ENCODE measurements at regions of chr4 and their contacts with region 1.

Region 1: DNA sequence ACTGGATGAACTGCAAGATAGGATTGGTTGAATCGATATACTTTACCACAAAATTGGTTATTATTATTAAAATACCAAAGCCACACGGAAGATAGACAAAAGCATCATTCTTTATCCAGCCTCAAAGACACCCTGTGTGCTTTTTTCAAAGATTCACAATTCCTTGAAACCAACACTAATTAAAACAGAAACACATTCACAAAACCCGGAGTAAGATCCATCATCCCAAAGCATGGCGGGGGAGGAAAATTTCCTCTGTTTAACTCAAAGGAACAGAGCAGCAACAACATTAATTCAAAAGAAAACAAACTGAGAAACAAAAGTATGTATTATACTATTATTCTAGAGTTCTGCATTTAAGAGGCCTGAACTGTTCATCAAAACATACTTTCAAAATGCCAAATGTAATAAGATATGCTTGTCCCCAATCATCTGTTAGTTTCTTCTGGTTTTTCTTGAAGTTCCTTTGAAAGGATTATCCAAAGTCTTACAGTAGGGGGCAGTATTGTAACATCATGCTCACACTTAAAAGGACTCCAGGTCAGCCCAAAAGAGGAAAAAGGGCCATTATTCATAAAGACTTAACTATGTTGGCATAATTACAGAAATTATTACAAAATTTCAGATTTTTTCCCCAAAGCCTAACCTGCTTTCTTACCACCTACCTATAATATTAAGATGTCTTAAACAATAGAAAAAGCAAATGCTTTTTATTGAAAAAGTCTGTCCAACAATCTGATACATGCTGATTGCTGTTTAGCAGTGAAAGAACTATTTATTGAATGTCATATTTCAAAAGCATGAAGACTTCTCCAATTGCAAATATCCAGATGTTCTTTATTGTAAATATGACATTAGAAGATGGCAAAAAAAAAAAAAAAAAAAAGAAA is 168.7 kb downstream of the SCFD2 start:
- DNase-seq: peak; percentile 79
- H3K4me3 Mint-ChIP-seq: no peak overlapping the region
- H3K27ac Mint-ChIP-seq: no peak overlapping the region
- H3K4me1 Mint-ChIP-seq: no peaks in the 10 kb centered on the region
- H3K27me3 Mint-ChIP-seq: no peaks in the 10 kb centered on the region
- CTCF ChIP-seq: peak; percentile 78

Region 2: DNA sequence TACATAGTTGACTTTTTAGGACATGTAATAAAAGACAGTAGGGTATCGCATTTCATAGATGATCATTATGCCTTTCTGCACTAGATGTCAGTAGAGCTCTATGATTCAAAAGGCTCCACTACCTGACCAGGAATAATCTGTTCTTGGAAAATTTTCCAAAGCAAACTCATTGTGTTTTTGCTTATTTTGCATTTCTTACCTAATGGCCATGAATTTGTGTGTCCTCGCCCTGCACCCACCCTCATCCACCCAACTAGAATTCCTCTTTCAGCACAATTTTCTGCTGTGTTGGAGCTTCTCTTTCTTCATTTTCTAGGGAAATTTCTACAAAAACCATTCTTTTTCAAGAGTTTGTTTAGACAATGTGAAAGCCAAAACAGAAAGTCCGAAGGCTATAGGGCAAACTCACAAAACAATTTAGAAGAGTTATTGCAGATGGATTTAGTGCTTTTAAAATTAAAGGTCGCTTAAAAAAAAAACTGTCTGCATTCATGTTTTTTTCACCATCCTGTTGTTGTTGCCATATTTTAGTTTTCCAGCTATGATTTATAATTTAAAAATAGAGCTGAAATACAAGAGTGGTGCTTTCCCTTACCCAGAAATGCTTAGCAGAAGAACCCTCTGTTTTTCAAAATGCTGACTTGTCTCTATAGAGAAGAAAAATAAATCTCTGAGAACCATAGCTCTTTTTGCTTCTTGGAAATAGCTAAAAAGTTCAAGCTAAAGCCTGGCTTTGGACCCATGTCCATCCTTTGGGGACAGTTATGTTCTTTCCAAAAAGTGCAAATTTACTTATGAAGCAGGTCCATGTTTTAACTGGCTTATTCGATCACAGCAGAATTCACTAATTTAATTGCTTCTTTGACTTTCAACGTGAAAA is 962.3 kb before region 1 on chr4:
- CTCF ChIA-PET with region 1: no interaction called
- POLR2A ChIA-PET with region 1: no interaction called
- intact Hi-C with region 1: loop called (anchors 10 kb)
- DNase-seq: peak; percentile 69
- H3K4me3 Mint-ChIP-seq: no peak overlapping the region
- H3K27ac Mint-ChIP-seq: no peak overlapping the region
- H3K4me1 Mint-ChIP-seq: no peaks in the 10 kb centered on the region
- H3K27me3 Mint-ChIP-seq: peaks cover 12% of the 10 kb centered on the region
- CTCF ChIP-seq: peak; percentile 69

Region 3: DNA sequence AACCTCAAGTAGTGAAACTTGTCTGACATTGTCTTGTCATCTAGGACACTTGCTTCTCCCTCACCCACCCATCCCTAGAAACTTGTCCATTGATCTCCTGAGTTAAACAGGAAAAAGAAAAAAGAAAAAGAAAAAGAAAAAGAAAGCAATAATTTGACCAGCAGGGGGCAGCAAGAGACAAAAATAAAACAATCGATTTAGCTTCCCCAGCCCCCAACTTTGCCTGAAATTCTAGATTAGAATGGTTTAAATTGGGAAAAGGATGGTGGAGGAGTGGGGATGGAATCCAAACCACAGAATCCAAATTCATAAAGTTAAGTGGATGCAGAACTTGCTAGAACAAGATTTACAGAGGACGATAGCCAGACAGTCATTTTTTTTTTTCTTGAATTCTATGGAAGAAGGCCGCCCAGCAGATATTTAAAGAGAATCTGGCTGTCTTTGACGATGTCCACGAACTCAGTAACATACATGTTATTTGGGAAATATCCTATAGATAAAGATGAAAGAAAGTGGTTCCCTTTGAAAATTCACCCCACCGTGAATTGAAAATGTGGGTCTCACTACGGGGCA is 820.9 kb before region 1 on chr4:
- CTCF ChIA-PET with region 1: no interaction called
- POLR2A ChIA-PET with region 1: no interaction called
- intact Hi-C with region 1: loop called (anchors 5 kb)
- DNase-seq: peak; percentile 70
- H3K4me3 Mint-ChIP-seq: no peak overlapping the region
- H3K27ac Mint-ChIP-seq: no peak overlapping the region
- H3K4me1 Mint-ChIP-seq: peaks cover 5% of the 10 kb centered on the region
- H3K27me3 Mint-ChIP-seq: peaks cover 33% of the 10 kb centered on the region
- CTCF ChIP-seq: peak; percentile 57

Region 4: DNA sequence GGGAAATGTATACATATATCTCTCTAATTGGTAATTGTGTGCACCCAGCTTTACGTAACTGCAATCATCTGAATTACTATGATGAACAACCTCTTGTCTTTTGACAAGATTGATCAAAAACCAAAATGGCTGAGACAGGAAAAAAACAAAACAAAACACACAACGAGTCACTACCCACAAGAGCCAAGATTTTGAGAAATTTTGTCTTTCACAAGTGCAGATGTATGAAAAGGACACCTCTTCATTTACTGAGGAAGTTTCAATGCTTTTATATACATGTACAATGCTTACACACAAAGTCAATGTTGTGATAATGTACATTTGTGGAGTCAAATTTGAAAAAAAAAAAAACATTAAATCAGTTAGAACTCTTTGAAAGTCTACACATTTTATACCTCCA is 55.8 kb before region 1 on chr4:
- CTCF ChIA-PET with region 1: no interaction called
- POLR2A ChIA-PET with region 1: no interaction called
- intact Hi-C with region 1: no loop called
- DNase-seq: no peak
- H3K4me3 Mint-ChIP-seq: no peak overlapping the region
- H3K27ac Mint-ChIP-seq: no peak overlapping the region
- H3K4me1 Mint-ChIP-seq: no peaks in the 10 kb centered on the region
- H3K27me3 Mint-ChIP-seq: no peaks in the 10 kb centered on the region
- CTCF ChIP-seq: no peak

Region 5: GRCh38 chr4:53365486-53366300 is 168.6 kb after region 1 on chr4 and contains the start of gene SCFD2:
- CTCF ChIA-PET with region 1: no interaction called
- POLR2A ChIA-PET with region 1: no interaction called
- intact Hi-C with region 1: loop called (anchors 2 kb)
- DNase-seq: peak; percentile 98
- H3K4me3 Mint-ChIP-seq: peak within 1 kb of the TSS; percentile 92
- H3K27ac Mint-ChIP-seq: peak within 1 kb of the TSS; percentile 76
- H3K4me1 Mint-ChIP-seq: peaks cover 30% of the 10 kb centered on the region
- H3K27me3 Mint-ChIP-seq: peaks cover 31% of the 10 kb centered on the region
- CTCF ChIP-seq: no peak
- total RNA-seq, gene SCFD2: 16.8 and 19.2 TPM in 2 replicates

Region 6: DNA sequence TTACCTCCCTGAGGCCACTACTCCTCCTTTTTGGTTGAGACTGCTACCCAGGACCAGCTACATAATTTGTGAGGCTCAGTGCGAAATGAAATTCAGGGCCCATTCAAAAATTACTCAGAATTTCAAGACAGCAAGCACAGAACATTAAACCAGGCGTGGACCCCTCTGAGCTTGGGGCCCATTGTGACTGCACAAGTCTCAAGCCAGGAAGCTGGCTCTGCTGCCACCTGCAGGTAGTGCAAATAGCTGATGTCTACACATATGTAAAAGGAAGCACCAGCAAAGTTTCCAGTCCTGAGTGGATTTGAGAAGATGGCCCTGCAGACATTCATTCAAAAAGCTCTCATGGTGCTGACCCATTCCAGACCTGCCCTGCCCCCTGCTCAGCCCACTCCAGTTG is 607.6 kb after region 1 on chr4:
- CTCF ChIA-PET with region 1: no interaction called
- POLR2A ChIA-PET with region 1: no interaction called
- intact Hi-C with region 1: loop called (anchors 1 kb)
- DNase-seq: peak; percentile 55
- H3K4me3 Mint-ChIP-seq: no peak overlapping the region
- H3K27ac Mint-ChIP-seq: no peak overlapping the region
- H3K4me1 Mint-ChIP-seq: no peaks in the 10 kb centered on the region
- H3K27me3 Mint-ChIP-seq: no peaks in the 10 kb centered on the region
- CTCF ChIP-seq: peak; percentile 43

Measured in MCF 10A (cell line).